Activated CD4-positive, alpha-beta T cell treated with anti-CD3 and anti-CD28 coated beads for 36 hours (primary cell): ENCODE measurements at regions of chr11 and their contacts with region 1.

Region 1: DNA sequence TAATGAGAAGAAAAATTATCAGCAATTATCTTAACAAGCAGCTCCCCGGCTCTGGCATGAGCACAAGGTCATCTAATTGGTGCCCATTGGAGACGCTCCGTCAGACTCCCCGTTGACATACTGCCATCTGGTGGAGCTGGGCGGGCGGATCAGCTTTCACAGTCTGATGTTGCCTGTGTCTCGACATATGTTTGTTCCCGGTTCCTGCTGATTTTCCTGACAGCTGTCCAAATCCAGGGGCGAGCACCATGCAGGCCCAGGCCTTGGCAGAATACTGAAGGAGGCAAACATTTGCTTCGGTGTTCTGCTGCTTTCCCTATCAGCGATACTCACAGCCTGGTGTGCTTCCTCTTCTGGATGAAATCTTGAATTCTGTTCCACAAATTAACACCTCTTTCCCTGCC is 43.8 kb upstream of the BARX2 start:
- DNase-seq: peak; percentile 86
- ATAC-seq: peak; percentile 75
- H3K4me3 Mint-ChIP-seq: no peak overlapping the region
- H3K27ac Mint-ChIP-seq: no peak overlapping the region
- H3K4me1 Mint-ChIP-seq: peaks cover 5% of the 10 kb centered on the region
- H3K27me3 Mint-ChIP-seq: no peaks in the 10 kb centered on the region

Region 2: GRCh38 chr11:128323381-128323780 is 1008.5 kb before region 1 on chr11:
- CTCF ChIA-PET with region 1: no interaction called
- POLR2A ChIA-PET with region 1: no interaction called
- intact Hi-C with region 1: no loop called
- DNase-seq: peak; percentile 67
- ATAC-seq: peak; percentile 8
- H3K4me3 Mint-ChIP-seq: peak overlapping the region; percentile 62
- H3K27ac Mint-ChIP-seq: peak overlapping the region; percentile 98
- H3K4me1 Mint-ChIP-seq: peaks cover 91% of the 10 kb centered on the region
- H3K27me3 Mint-ChIP-seq: no peaks in the 10 kb centered on the region

Region 3: GRCh38 chr11:128965485-128965884 is 366.4 kb before region 1 on chr11:
- CTCF ChIA-PET with region 1: no interaction called
- POLR2A ChIA-PET with region 1: no interaction called
- intact Hi-C with region 1: loop called in 1 of 2 experiments (anchors 5 kb)
- DNase-seq: no peak
- ATAC-seq: peak; percentile 88
- H3K4me3 Mint-ChIP-seq: no peak overlapping the region
- H3K27ac Mint-ChIP-seq: no peak overlapping the region
- H3K4me1 Mint-ChIP-seq: peaks cover 27% of the 10 kb centered on the region
- H3K27me3 Mint-ChIP-seq: no peaks in the 10 kb centered on the region

Region 4: GRCh38 chr11:129230006-129230405 is 101.9 kb before region 1 on chr11:
- CTCF ChIA-PET with region 1: interaction called, 13 read pairs
- POLR2A ChIA-PET with region 1: no interaction called
- intact Hi-C with region 1: loop called (anchors 1 kb)
- DNase-seq: no peak
- ATAC-seq: no peak
- H3K4me3 Mint-ChIP-seq: no peak overlapping the region
- H3K27ac Mint-ChIP-seq: no peak overlapping the region
- H3K4me1 Mint-ChIP-seq: no peaks in the 10 kb centered on the region
- H3K27me3 Mint-ChIP-seq: no peaks in the 10 kb centered on the region

Region 5: DNA sequence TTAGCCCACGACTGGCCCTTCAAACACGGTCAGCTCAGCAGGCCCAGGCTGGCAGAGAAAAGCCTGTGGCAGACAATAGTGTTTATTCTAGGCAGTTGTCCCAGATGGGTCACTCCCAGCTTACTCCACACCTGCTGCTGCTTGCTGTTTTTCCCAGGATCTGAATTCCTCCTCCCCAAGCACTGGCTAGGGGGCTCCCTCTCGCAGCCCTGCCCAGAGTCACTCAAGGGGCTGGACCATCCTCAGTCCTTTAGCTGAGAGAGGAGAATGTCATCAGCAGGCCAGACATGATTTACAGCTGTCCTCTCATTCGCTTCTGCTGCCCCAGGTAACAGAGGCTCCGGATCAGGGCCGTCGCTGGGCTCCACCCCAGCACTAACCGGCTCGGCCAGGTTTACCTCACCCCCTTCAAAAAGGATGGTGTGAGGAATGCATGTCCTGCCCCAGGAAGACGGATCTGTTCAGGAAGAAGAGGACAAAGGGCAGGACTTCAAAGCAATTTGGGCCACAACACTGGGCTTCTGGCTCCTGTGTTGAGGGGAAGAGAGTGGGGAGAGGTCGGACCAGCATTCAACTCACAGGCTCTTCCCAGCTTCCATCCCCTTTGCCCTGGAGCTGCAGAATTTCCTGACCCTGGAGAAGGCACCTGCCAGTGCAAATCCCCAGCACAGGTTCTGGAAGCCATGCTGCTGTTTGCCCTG is 15.9 kb before region 1 on chr11:
- CTCF ChIA-PET with region 1: interaction called, 22 read pairs
- POLR2A ChIA-PET with region 1: no interaction called
- intact Hi-C with region 1: no loop called
- DNase-seq: no peak
- ATAC-seq: no peak
- H3K4me3 Mint-ChIP-seq: no peak overlapping the region
- H3K27ac Mint-ChIP-seq: no peak overlapping the region
- H3K4me1 Mint-ChIP-seq: peaks cover 5% of the 10 kb centered on the region
- H3K27me3 Mint-ChIP-seq: no peaks in the 10 kb centered on the region